MCF 10A (cell line): ENCODE measurements at regions of chr6 and their contacts with region 1.

Region 1: GRCh38 chr6:26216356-26216885 is 129.2 kb downstream of the HFE start:
- DNase-seq: peak; percentile 98
- H3K4me3 Mint-ChIP-seq: no peak overlapping the region
- H3K27ac Mint-ChIP-seq: no peak overlapping the region
- H3K4me1 Mint-ChIP-seq: no peaks in the 10 kb centered on the region
- H3K27me3 Mint-ChIP-seq: no peaks in the 10 kb centered on the region
- CTCF ChIP-seq: no peak

Region 2: GRCh38 chr6:25844518-25844917 is 371.9 kb before region 1 on chr6:
- CTCF ChIA-PET with region 1: no interaction called
- POLR2A ChIA-PET with region 1: no interaction called
- intact Hi-C with region 1: no loop called
- DNase-seq: no peak
- H3K4me3 Mint-ChIP-seq: no peak overlapping the region
- H3K27ac Mint-ChIP-seq: no peak overlapping the region
- H3K4me1 Mint-ChIP-seq: no peaks in the 10 kb centered on the region
- H3K27me3 Mint-ChIP-seq: peaks cover 41% of the 10 kb centered on the region
- CTCF ChIP-seq: no peak

Region 3: GRCh38 chr6:26025894-26026832 is 190.3 kb before region 1 on chr6:
- CTCF ChIA-PET with region 1: no interaction called
- POLR2A ChIA-PET with region 1: interaction called, 40 read pairs
- intact Hi-C with region 1: no loop called
- DNase-seq: peak; percentile 96
- H3K4me3 Mint-ChIP-seq: peak overlapping the region; percentile 83
- H3K27ac Mint-ChIP-seq: peak overlapping the region; percentile 84
- H3K4me1 Mint-ChIP-seq: peaks cover 17% of the 10 kb centered on the region
- H3K27me3 Mint-ChIP-seq: no peaks in the 10 kb centered on the region
- CTCF ChIP-seq: peak; percentile 81

Region 4: DNA sequence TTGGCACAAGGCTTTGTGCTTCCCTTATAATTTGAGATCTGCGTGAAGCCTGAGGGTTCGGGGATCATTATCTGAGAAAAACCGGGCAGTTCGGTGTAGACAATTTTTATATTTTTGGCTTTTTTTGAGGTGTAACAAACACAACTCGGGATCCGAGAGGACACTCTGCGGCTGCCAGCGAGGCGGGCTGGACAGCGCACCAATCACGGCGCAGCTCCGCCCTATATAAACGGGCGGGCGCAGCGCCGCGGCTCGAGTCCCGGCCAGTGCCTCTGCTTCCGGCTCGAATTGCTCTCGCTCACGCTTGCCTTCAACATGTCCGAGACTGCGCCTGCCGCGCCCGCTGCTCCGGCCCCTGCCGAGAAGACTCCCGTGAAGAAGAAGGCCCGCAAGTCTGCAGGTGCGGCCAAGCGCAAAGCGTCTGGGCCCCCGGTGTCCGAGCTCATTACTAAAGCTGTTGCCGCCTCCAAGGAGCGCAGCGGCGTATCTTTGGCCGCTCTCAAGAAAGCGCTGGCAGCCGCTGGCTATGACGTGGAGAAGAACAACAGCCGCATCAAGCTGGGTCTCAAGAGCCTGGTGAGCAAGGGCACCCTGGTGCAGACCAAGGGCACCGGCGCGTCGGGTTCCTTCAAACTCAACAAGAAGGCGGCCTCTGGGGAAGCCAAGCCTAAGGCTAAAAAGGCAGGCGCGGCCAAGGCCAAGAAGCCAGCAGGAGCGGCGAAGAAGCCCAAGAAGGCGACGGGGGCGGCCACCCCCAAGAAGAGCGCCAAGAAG is 60.2 kb before region 1 on chr6:
- CTCF ChIA-PET with region 1: interaction called, 4 read pairs
- POLR2A ChIA-PET with region 1: interaction called, 231 read pairs
- intact Hi-C with region 1: loop called (anchors 1 kb)
- DNase-seq: peak; percentile 91
- H3K4me3 Mint-ChIP-seq: peak overlapping the region; percentile 82
- H3K27ac Mint-ChIP-seq: peak overlapping the region; percentile 64
- H3K4me1 Mint-ChIP-seq: peaks cover 23% of the 10 kb centered on the region
- H3K27me3 Mint-ChIP-seq: no peaks in the 10 kb centered on the region
- CTCF ChIP-seq: no peak

Region 5: DNA sequence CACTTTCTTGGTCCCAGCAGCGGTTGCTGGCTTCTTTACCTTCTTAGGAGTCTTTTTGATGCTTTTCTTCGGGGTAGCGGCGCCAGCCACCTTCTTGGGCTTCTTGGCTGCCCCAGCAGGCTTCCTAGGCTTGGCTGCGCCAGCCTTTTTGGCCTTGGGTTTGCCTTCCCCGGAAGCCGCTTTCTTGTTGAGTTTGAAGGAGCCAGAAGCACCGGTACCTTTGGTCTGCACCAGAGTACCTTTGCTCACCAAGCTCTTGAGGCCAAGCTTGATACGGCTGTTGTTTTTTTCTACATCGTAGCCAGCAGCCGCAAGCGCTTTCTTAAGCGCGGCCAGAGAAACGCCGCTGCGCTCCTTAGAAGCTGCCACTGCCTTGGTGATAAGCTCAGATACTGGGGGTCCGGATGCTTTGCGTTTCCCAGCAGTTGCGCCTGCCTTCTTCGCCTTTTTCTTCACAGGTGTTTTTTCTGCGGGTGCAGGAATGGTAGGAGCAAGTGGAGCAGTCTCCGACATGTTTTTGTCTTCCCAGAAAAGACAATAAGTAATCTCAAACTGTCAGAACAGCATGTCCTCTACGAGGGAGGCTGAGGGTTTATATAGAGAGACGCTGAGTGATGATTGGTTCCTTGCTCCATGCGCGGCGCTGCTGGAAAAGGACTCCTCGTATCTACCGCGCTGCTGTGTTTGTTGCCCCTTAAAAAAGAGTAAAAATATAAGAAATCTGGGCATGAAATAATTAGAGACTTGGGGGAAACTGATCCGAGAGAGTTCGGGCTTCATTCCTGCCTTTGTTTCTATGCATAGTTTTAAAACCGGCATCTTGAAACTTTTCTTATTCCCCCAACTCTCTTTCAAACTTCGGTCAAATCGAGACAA is 18.2 kb after region 1 on chr6:
- CTCF ChIA-PET with region 1: interaction called, 5 read pairs
- POLR2A ChIA-PET with region 1: interaction called, 200 read pairs
- intact Hi-C with region 1: loop called (anchors 1 kb)
- DNase-seq: peak; percentile 90
- H3K4me3 Mint-ChIP-seq: peak overlapping the region; percentile 82
- H3K27ac Mint-ChIP-seq: peak overlapping the region; percentile 85
- H3K4me1 Mint-ChIP-seq: peaks cover 32% of the 10 kb centered on the region
- H3K27me3 Mint-ChIP-seq: no peaks in the 10 kb centered on the region
- CTCF ChIP-seq: no peak

Region 6: DNA sequence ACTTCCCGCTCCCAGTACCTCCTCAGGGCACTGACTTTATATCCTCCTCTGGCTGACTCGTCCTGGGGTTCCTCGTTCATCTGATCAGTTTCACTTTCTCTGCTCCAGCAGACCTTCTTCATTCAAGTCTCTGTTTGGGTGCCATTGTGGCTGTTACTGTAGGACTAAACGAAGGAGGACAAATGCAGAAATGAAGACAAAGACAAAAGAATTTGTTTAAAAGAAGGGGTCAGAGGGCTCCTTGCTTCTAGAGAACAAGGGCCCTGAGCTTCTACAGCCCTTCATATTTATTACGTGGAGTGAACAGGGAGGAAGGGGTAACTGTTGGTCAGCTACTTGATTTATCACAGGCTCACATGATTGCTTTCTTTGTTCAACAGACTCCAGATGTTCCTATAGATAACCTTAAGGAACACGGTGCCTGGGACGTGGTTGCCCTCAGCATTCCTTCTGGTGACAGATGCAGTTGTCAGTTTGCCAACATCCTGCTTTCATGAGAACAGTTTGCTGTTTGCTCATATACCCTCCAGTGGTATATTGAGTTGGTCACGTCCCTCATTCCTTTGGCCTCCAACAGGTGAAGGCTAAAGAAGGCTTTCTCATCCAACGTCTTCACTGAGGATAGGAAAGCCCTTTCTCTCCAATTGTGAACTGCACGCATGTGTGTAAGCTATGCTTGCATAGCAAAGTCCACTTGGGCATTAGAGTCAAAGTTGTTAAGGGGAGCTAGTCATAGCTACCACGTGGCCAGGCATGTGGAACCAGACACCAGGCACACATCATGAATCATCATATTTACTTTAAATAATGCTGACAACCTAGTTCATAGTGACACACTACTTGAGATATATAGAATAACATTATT is 79.5 kb after region 1 on chr6:
- CTCF ChIA-PET with region 1: no interaction called
- POLR2A ChIA-PET with region 1: interaction called, 20 read pairs
- intact Hi-C with region 1: no loop called
- DNase-seq: peak; percentile 87
- H3K4me3 Mint-ChIP-seq: peak overlapping the region; percentile 63
- H3K27ac Mint-ChIP-seq: peak overlapping the region; percentile 81
- H3K4me1 Mint-ChIP-seq: peaks cover 22% of the 10 kb centered on the region
- H3K27me3 Mint-ChIP-seq: no peaks in the 10 kb centered on the region
- CTCF ChIP-seq: no peak

Region 7: GRCh38 chr6:26485112-26485780 is 268.8 kb after region 1 on chr6:
- CTCF ChIA-PET with region 1: no interaction called
- POLR2A ChIA-PET with region 1: no interaction called
- intact Hi-C with region 1: no loop called
- DNase-seq: no peak
- H3K4me3 Mint-ChIP-seq: no peak overlapping the region
- H3K27ac Mint-ChIP-seq: no peak overlapping the region
- H3K4me1 Mint-ChIP-seq: no peaks in the 10 kb centered on the region
- H3K27me3 Mint-ChIP-seq: no peaks in the 10 kb centered on the region
- CTCF ChIP-seq: no peak

Region 8: DNA sequence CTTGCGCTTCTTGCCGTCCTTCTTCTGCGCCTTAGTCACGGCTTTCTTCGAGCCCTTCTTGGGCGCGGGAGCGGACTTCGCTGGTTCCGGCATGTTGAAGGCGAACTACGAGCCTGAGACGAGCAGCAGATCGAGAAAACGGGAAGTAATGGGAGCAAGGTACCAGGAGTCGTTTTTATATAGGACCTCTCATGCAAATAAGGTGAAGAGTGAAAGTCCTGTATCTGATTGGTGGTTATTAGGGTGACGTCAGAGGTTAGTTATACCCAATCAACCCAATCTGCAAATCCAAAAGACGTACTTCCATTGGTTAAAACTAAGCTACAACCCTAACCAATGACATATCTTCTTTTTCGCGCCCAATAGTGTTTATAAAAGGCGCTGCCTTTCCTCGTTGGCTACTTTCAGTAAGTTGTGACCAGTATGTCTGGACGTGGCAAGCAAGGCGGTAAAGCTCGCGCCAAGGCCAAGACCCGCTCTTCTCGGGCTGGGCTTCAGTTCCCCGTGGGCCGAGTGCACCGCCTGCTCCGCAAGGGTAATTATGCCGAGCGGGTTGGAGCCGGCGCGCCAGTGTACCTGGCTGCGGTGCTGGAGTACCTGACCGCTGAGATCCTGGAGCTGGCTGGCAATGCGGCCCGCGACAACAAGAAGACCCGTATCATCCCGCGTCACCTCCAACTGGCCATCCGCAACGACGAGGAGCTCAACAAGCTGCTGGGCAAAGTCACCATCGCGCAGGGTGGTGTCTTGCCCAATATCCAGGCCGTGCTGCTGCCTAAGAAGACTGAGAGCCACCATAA is 930.5 kb after region 1 on chr6:
- CTCF ChIA-PET with region 1: no interaction called
- POLR2A ChIA-PET with region 1: interaction called, 72 read pairs
- intact Hi-C with region 1: loop called (anchors 5 kb)
- DNase-seq: peak; percentile 99
- H3K4me3 Mint-ChIP-seq: no peak overlapping the region
- H3K27ac Mint-ChIP-seq: no peak overlapping the region
- H3K4me1 Mint-ChIP-seq: no peaks in the 10 kb centered on the region
- H3K27me3 Mint-ChIP-seq: no peaks in the 10 kb centered on the region
- CTCF ChIP-seq: no peak

Region 9: DNA sequence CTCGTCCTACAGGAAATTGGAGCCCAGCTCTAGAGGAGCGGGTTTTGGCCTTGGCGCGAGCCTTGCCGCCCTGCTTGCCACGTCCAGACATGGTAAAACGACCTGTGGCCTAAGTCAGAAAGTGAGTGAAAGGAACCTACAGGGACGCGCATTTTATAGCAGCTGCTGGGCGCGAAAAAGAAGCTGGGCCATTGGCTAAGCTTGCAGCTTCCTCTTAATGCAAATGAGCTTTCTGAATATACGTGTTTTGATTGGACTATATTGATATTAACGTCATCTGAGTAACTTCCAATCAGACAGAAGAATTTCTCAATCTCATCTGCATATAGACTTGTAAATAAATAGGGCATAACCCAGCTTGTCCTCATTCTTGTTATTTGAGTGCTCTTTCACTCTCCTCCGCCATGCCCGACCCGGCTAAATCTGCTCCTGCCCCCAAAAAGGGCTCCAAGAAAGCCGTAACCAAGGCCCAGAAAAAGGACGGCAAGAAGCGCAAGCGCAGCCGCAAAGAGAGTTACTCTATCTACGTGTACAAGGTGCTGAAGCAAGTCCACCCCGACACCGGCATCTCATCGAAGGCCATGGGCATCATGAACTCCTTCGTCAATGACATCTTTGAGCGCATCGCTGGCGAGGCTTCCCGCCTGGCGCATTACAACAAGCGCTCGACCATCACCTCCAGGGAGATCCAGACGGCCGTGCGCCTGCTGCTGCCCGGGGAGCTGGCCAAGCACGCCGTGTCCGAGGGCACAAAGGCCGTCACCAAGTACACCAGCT is 1676.8 kb after region 1 on chr6:
- CTCF ChIA-PET with region 1: no interaction called
- POLR2A ChIA-PET with region 1: interaction called, 28 read pairs
- intact Hi-C with region 1: no loop called
- DNase-seq: peak; percentile 98
- H3K4me3 Mint-ChIP-seq: no peak overlapping the region
- H3K27ac Mint-ChIP-seq: no peak overlapping the region
- H3K4me1 Mint-ChIP-seq: peaks cover 12% of the 10 kb centered on the region
- H3K27me3 Mint-ChIP-seq: no peaks in the 10 kb centered on the region
- CTCF ChIP-seq: no peak